ENCODE measurements at regions of chr4 and their contacts with region 1.

Region 1: GRCh38 chr4:37452952-37453280 is 208.4 kb downstream of the NWD2 start:
- DNase-seq: peak; percentile 67
- H3K4me3 Mint-ChIP-seq: peak overlapping the region; percentile 83
- H3K27ac Mint-ChIP-seq: peak overlapping the region; percentile 42
- H3K4me1 Mint-ChIP-seq: peaks cover 9% of the 10 kb centered on the region
- H3K27me3 Mint-ChIP-seq: no peaks in the 10 kb centered on the region
- CTCF ChIP-seq: no peak

Region 2: DNA sequence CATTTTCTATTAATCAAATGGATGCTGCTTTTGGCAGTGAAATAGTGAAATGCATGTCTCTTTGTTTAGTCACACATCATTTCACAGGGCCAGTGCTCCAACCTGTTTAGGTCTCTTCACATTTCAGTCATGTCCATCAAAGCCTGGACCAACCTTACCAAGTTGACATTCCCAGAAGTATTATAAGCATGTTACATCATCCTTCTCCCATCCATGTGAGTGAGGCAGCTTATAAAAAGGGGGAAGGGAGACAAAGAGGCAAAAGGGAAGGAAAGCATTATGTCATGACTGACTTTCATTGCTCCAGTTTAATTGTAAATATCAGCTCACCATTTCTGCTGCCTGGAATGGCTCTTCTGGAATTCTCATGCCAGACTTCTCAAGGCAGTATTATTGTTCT is 113.9 kb before region 1 on chr4:
- CTCF ChIA-PET with region 1: no interaction called
- intact Hi-C with region 1: no loop called
- DNase-seq: no peak
- H3K4me3 Mint-ChIP-seq: no peak overlapping the region
- H3K27ac Mint-ChIP-seq: no peak overlapping the region
- H3K4me1 Mint-ChIP-seq: peaks cover 11% of the 10 kb centered on the region
- H3K27me3 Mint-ChIP-seq: no peaks in the 10 kb centered on the region
- CTCF ChIP-seq: no peak

Region 3: DNA sequence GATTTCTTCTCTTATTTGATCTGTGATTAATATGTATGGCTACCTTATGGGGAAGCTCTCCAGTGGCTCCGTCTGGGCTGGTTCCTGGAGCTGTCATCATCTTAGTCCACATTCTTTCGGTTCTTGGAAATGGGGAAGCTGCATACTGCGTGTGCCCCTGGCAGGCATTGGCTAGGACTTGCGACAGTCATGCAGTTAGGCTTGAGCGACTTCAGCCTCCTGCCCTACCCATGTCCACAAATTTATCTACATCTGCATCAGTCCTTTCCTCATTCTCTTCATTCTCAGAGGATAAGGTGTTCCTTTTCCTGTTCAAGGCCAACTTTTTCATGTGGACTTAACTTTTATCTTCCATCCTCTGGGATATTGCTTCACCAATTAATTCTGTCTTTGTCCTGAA is 19.1 kb after region 1 on chr4:
- CTCF ChIA-PET with region 1: interaction called, 4 read pairs
- intact Hi-C with region 1: loop called (anchors 2 kb)
- DNase-seq: peak; percentile 79
- H3K4me3 Mint-ChIP-seq: peak overlapping the region; percentile 46
- H3K27ac Mint-ChIP-seq: peak overlapping the region; percentile 59
- H3K4me1 Mint-ChIP-seq: peaks cover 61% of the 10 kb centered on the region
- H3K27me3 Mint-ChIP-seq: no peaks in the 10 kb centered on the region
- CTCF ChIP-seq: no peak

Region 4: DNA sequence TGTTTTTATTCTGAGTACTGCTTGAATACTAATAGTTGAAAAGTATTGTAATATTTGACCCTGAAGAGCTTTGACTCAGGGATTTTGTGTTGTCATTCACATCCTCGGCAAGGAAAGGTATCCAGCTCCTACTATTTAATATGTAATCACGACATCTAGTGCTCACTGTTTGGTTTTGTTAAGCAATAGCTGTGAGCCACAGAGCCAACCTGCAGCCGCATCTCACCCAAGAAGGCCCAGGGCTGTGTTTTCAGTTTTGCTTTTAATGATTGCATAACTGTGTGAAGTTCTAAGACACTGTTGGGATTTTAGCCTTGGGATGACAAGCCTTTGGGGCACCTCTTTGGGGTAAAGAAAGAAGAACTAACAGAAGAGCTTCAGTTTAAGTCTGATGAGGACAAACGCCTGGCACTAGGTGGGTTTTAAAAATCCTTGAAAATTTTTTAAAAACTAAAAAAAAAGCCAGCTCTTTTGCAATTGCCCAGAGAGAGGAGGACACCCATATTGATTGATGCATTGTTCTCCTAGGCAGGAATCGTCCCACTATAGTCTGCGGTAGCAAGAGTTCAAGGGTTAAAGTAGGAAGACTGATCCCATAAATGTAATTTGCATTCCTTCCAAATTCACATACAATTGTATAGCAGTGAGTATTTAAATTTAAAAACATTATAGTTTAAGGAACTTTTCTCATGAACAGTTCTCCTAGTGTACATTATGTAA is 75.4 kb after region 1 on chr4:
- CTCF ChIA-PET with region 1: interaction called, 19 read pairs
- intact Hi-C with region 1: loop called (anchors 2 kb)
- DNase-seq: peak; percentile 52
- H3K4me3 Mint-ChIP-seq: no peak overlapping the region
- H3K27ac Mint-ChIP-seq: no peak overlapping the region
- H3K4me1 Mint-ChIP-seq: peaks cover 11% of the 10 kb centered on the region
- H3K27me3 Mint-ChIP-seq: no peaks in the 10 kb centered on the region
- CTCF ChIP-seq: no peak

Region 5: DNA sequence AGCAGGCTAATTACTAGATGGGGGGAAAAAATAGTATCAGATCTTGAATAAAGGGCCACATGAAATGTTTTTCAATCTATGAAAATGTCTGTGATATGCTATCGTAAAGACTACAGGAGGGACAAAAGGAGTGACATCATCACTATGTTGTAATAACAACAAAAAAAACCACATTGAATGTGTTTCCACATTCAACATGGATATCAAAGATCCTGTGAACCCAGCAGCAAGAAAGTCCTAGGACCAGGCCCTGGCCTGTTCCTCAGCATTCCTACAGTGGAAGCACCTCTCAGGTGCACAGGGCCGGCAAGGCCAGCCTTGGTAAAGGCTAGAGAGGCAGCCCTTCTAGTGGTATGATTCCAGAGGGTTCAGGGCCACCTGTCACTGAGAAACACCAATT is 114.9 kb after region 1 on chr4:
- CTCF ChIA-PET with region 1: interaction called, 15 read pairs
- intact Hi-C with region 1: loop called (anchors 1 kb)
- DNase-seq: no peak
- H3K4me3 Mint-ChIP-seq: no peak overlapping the region
- H3K27ac Mint-ChIP-seq: peak overlapping the region; percentile 77
- H3K4me1 Mint-ChIP-seq: peaks cover 25% of the 10 kb centered on the region
- H3K27me3 Mint-ChIP-seq: no peaks in the 10 kb centered on the region
- CTCF ChIP-seq: no peak

Region 6: DNA sequence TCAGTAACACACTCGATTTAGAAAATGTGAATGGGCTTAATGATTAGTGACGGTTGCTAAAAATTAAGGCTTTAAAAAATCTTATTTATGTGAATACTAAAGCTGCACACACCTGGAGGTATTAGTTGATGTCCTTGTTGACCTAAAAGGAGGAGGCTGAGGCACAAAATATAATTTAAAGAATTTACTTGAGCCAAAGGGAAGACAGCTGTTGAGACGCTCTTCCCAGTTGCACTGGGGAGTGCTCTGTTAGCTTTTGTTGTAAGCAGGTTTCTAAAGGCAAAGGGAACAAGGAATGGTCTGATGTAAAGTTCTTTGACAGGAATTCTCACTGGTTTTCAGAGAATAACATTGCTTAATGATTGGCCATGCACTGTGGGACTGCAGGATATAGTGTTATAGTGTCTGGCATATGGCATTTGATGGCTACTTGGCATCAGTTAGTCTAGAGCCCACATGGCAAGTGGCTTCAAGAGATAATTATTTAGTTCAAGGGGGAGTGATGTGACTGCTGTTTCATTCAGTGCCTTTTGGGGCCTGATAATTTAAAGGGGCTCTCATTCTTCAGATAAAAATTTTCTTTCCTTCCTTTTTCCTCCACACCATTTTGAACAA is 342.8 kb after region 1 on chr4:
- CTCF ChIA-PET with region 1: no interaction called
- intact Hi-C with region 1: loop called (anchors 5 kb)
- DNase-seq: no peak
- H3K4me3 Mint-ChIP-seq: no peak overlapping the region
- H3K27ac Mint-ChIP-seq: no peak overlapping the region
- H3K4me1 Mint-ChIP-seq: no peaks in the 10 kb centered on the region
- H3K27me3 Mint-ChIP-seq: no peaks in the 10 kb centered on the region
- CTCF ChIP-seq: no peak

Region 7: DNA sequence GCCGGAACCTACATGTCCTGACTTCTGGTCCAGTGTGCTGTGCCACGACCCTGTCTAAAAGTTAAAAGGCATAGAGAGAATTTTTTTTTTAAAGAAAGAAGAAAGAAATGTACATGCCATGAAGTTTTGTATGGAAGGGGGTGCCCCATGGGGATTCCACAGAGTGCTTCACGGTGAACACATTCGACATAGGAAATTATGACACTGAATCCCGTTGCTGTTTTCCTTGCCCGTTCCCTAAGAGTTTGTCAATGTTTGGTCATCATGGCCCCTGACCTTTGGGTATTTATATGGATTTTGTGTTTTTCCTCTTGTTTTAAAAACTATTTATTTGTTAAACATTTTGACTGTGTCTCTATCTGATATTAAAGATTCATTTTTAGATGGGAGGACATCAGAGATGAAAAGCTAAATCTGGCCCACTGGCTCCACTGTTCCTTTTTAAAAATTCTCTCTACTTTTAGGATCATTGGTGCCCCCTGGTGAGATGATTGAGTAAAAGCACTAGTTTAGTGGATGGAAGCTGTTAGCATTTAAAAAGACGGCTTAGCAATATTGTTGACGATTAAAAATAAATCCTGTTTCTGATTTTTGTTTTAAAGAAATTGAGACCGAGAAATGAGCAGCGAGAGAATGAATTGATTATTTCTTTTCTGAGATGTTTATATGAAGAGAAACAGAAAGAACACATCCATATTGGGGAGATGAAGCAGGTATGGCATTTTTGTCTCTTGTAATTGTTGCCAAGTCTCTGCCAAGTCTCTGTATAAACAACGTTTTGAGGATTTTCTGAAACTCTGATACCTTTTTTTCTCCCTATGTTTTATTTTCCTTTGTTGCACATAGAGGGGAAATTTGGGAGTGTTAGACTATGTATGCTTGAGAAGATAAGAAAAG is 582.3 kb after region 1 on chr4:
- CTCF ChIA-PET with region 1: no interaction called
- intact Hi-C with region 1: loop called (anchors 10 kb)
- DNase-seq: peak; percentile 55
- H3K4me3 Mint-ChIP-seq: no peak overlapping the region
- H3K27ac Mint-ChIP-seq: no peak overlapping the region
- H3K4me1 Mint-ChIP-seq: no peaks in the 10 kb centered on the region
- H3K27me3 Mint-ChIP-seq: no peaks in the 10 kb centered on the region
- CTCF ChIP-seq: peak; percentile 24

Measured in Calu3 (cell line).